PC-3 (cell line): ENCODE measurements at regions of chr7 and their contacts with region 1.

Region 1: DNA sequence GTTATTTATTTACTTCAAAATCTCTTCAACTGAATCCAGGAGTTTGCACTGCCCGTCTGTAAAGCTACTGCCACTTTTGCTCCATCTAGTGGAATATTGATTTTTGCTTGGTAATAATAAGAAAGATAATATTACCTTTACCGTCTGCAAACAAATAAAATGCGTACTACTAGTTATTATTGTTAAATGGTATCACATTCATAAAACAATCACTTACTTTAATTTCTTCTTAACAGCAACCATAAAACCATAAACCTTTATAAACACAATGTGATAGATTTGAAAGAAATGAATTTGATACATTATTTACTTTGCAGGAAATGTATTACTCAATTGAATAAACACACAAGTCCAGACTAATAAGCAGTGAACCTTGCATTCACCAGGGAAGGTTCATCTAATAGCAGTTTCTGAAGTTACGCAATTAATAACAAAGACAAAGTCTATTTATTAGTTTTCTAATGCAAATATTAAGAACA is 6.4 kb downstream of the AGMO start:
- DNase-seq: peak; percentile 27
- ATAC-seq: peak; percentile 72
- H3K4me3 ChIP-seq: no peak overlapping the region
- H3K27ac ChIP-seq: no peak overlapping the region
- H3K4me1 ChIP-seq: 0 out of 2 replicates have a peak, but pooled peaks cover 4% of the 10 kb centered on the region
- H3K27me3 ChIP-seq: no peaks in the 10 kb centered on the region
- CTCF ChIP-seq: peak; percentile 49

Region 2: GRCh38 chr7:15326044-15326644 is 229.3 kb before region 1 on chr7:
- CTCF ChIA-PET with region 1: no interaction called
- POLR2A ChIA-PET with region 1: no interaction called
- intact Hi-C with region 1: loop called (anchors 1 kb)
- DNase-seq: peak; percentile 59
- ATAC-seq: peak; percentile 53; the same call in 1 of the 2 replicates
- H3K4me3 ChIP-seq: no peak overlapping the region
- H3K27ac ChIP-seq: no peak overlapping the region
- H3K4me1 ChIP-seq: no peaks in the 10 kb centered on the region
- H3K27me3 ChIP-seq: peaks cover 5% of the 10 kb centered on the region
- CTCF ChIP-seq: peak; percentile 77

Region 3: GRCh38 chr7:15370441-15370840 is 185.0 kb before region 1 on chr7:
- CTCF ChIA-PET with region 1: no interaction called
- POLR2A ChIA-PET with region 1: no interaction called
- intact Hi-C with region 1: no loop called
- DNase-seq: no peak
- ATAC-seq: no peak
- H3K4me3 ChIP-seq: no peak overlapping the region
- H3K27ac ChIP-seq: no peak overlapping the region
- H3K4me1 ChIP-seq: no peaks in the 10 kb centered on the region
- H3K27me3 ChIP-seq: no peaks in the 10 kb centered on the region
- CTCF ChIP-seq: no peak

Region 4: DNA sequence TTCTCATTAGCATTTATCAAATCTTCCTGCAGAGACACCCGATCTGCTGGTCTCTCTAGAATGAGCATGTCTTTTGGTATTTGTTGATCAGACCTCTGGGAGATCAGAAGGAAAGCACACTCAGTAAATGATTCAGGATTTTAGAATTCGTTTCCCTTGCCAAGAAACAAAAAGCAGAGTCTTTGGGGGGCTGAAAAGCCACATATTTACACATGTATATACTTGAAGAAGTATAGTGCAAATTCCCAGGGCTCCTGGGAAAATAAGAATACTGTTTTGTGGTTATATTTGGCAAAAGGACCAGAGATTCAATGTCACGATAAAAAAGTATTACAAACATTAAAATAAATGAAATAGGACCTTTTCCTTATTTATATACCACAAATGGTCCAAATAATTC is 93.8 kb before region 1 on chr7:
- CTCF ChIA-PET with region 1: no interaction called
- POLR2A ChIA-PET with region 1: no interaction called
- intact Hi-C with region 1: loop called (anchors 5 kb)
- DNase-seq: peak; percentile 57
- ATAC-seq: peak; percentile 60
- H3K4me3 ChIP-seq: no peak overlapping the region
- H3K27ac ChIP-seq: peak overlapping the region; percentile 47; the same call in 1 of the 2 replicates
- H3K4me1 ChIP-seq: peaks cover 11% of the 10 kb centered on the region
- H3K27me3 ChIP-seq: 0 out of 2 replicates have a peak, but pooled peaks cover 4% of the 10 kb centered on the region
- CTCF ChIP-seq: no peak

Region 5: GRCh38 chr7:15494711-15495110 is 60.7 kb before region 1 on chr7:
- CTCF ChIA-PET with region 1: interaction called, 18 read pairs
- POLR2A ChIA-PET with region 1: no interaction called
- intact Hi-C with region 1: no loop called
- DNase-seq: peak; percentile 40
- ATAC-seq: peak; percentile 67
- H3K4me3 ChIP-seq: no peak overlapping the region
- H3K27ac ChIP-seq: no peak overlapping the region
- H3K4me1 ChIP-seq: no peaks in the 10 kb centered on the region
- H3K27me3 ChIP-seq: no peaks in the 10 kb centered on the region
- CTCF ChIP-seq: no peak

Region 6: GRCh38 chr7:15503603-15504290 is 51.7 kb before region 1 on chr7:
- CTCF ChIA-PET with region 1: no interaction called
- POLR2A ChIA-PET with region 1: no interaction called
- intact Hi-C with region 1: loop called (anchors 2 kb)
- DNase-seq: peak; percentile 43
- ATAC-seq: peak; percentile 74
- H3K4me3 ChIP-seq: no peak overlapping the region
- H3K27ac ChIP-seq: peak overlapping the region; percentile 32
- H3K4me1 ChIP-seq: peaks cover 5% of the 10 kb centered on the region; the same call in 1 of the 2 replicates
- H3K27me3 ChIP-seq: no peaks in the 10 kb centered on the region
- CTCF ChIP-seq: peak; percentile 35; the same call in 1 of the 2 replicates

Region 7: DNA sequence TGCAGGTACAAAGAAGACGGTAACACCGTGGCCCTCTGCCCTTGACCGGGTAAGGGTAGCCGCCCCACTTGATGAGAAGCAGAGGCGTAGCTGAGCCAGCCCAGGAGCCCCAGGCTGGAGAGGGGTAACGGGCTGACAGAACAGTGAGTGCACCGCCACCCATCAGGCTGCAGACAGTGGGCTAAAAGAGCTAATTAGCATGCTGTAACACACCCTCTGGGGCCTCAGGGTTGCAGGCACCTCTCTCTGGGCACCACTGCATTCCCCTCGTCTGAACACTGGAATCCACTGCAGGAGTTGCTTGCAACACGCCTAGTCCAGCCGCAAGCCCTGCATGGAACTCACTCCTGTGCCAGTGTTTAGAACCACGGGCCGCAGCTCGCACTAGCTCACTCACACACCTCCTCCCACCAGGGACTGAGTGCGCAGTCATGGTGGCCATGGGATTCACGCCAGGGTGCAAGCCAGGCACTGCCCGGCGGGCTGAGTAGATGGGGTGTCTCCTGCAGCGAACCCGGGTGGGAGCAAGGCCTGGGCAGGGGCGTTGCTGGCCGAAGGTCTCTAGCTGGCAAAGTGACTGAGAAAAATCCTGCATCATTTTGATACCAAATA is 29.7 kb before region 1 on chr7:
- CTCF ChIA-PET with region 1: no interaction called
- POLR2A ChIA-PET with region 1: no interaction called
- intact Hi-C with region 1: no loop called
- DNase-seq: no peak
- ATAC-seq: no peak
- H3K4me3 ChIP-seq: no peak overlapping the region
- H3K27ac ChIP-seq: no peak overlapping the region
- H3K4me1 ChIP-seq: no peaks in the 10 kb centered on the region
- H3K27me3 ChIP-seq: no peaks in the 10 kb centered on the region
- CTCF ChIP-seq: no peak

Region 8: GRCh38 chr7:16071246-16071857 is 515.9 kb after region 1 on chr7:
- CTCF ChIA-PET with region 1: no interaction called
- POLR2A ChIA-PET with region 1: no interaction called
- intact Hi-C with region 1: loop called (anchors 5 kb)
- DNase-seq: peak; percentile 83
- ATAC-seq: peak; percentile 72; the same call in 1 of the 2 replicates
- H3K4me3 ChIP-seq: no peak overlapping the region
- H3K27ac ChIP-seq: no peak overlapping the region
- H3K4me1 ChIP-seq: peaks cover 6% of the 10 kb centered on the region; the same call in 1 of the 2 replicates
- H3K27me3 ChIP-seq: no peaks in the 10 kb centered on the region
- CTCF ChIP-seq: peak; percentile 77

Region 9: DNA sequence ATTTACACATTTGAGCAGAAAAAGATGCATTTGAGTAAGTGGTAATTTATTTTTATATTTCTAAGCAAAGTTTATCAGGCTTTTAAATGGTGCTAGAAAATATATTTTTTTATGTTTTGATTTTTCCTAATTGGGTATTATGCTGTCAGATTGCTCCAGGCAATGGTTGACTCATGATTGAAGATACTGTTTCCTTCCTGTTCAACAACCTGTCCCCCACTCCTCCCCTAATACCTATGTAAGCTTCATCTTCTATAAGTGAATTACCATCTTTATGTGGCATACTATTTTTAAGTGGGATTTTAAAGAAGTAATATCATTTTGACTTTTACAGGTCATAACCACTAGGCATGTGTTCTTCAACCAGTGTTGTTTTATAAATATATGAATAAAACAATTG is 1219.6 kb after region 1 on chr7:
- CTCF ChIA-PET with region 1: no interaction called
- POLR2A ChIA-PET with region 1: no interaction called
- intact Hi-C with region 1: no loop called
- DNase-seq: peak; percentile 42
- ATAC-seq: peak; percentile 68
- H3K4me3 ChIP-seq: no peak overlapping the region
- H3K27ac ChIP-seq: no peak overlapping the region
- H3K4me1 ChIP-seq: peaks cover 7% of the 10 kb centered on the region
- H3K27me3 ChIP-seq: no peaks in the 10 kb centered on the region
- CTCF ChIP-seq: no peak